Activated CD4-positive, alpha-beta T cell treated with anti-CD3 and anti-CD28 coated beads, Interleukin-2, amount 10 ng/mL, durations not matched to agents 24 days and 14 days (primary cell): ENCODE measurements at regions of chr2 and their contacts with region 1.

Region 1: GRCh38 chr2:230712443-230713330 is at the start of gene CAB39:
- DNase-seq: peak; percentile 98
- H3K4me3 Mint-ChIP-seq: peak within 1 kb of the TSS; percentile 92
- H3K27ac Mint-ChIP-seq: peak within 1 kb of the TSS; percentile 91
- H3K4me1 Mint-ChIP-seq: peaks cover 28% of the 10 kb centered on the region
- H3K27me3 Mint-ChIP-seq: no peaks in the 10 kb centered on the region
- total RNA-seq, gene CAB39: 166 and 168 TPM in 2 replicates

Region 2: GRCh38 chr2:230643576-230644291 is 69.0 kb before region 1 on chr2:
- intact Hi-C with region 1: loop called (anchors 2 kb)
- DNase-seq: peak; percentile 87
- H3K4me3 Mint-ChIP-seq: peak overlapping the region; percentile 28
- H3K27ac Mint-ChIP-seq: peak overlapping the region; percentile 90
- H3K4me1 Mint-ChIP-seq: peaks cover 24% of the 10 kb centered on the region
- H3K27me3 Mint-ChIP-seq: no peaks in the 10 kb centered on the region

Region 3: GRCh38 chr2:230668184-230668938 is 44.3 kb before region 1 on chr2:
- intact Hi-C with region 1: loop called (anchors 2 kb)
- DNase-seq: peak; percentile 77
- H3K4me3 Mint-ChIP-seq: peak overlapping the region; percentile 73
- H3K27ac Mint-ChIP-seq: peak overlapping the region; percentile 96
- H3K4me1 Mint-ChIP-seq: peaks cover 69% of the 10 kb centered on the region
- H3K27me3 Mint-ChIP-seq: no peaks in the 10 kb centered on the region

Region 4: GRCh38 chr2:230751062-230751461 is 38.4 kb after region 1 on chr2:
- intact Hi-C with region 1: loop called (anchors 1 kb)
- DNase-seq: peak; percentile 65
- H3K4me3 Mint-ChIP-seq: no peak overlapping the region
- H3K27ac Mint-ChIP-seq: peak overlapping the region; percentile 70
- H3K4me1 Mint-ChIP-seq: peaks cover 63% of the 10 kb centered on the region
- H3K27me3 Mint-ChIP-seq: no peaks in the 10 kb centered on the region

Region 5: GRCh38 chr2:230793572-230794359 is 81.1 kb after region 1 on chr2:
- intact Hi-C with region 1: loop called (anchors 1 kb)
- DNase-seq: peak; percentile 91
- H3K4me3 Mint-ChIP-seq: peak overlapping the region; percentile 65
- H3K27ac Mint-ChIP-seq: peak overlapping the region; percentile 95
- H3K4me1 Mint-ChIP-seq: peaks cover 43% of the 10 kb centered on the region
- H3K27me3 Mint-ChIP-seq: no peaks in the 10 kb centered on the region

Region 6: GRCh38 chr2:230798769-230799399 is 86.2 kb after region 1 on chr2:
- intact Hi-C with region 1: loop called (anchors 1 kb)
- DNase-seq: peak; percentile 88
- H3K4me3 Mint-ChIP-seq: peak overlapping the region; percentile 31
- H3K27ac Mint-ChIP-seq: peak overlapping the region; percentile 71
- H3K4me1 Mint-ChIP-seq: peaks cover 22% of the 10 kb centered on the region
- H3K27me3 Mint-ChIP-seq: no peaks in the 10 kb centered on the region